ENCODE measurements at regions of chr1 and their contacts with region 1.

Region 1: GRCh38 chr1:28088168-28088961 is at the start of gene EYA3:
- DNase-seq: peak; percentile 99
- ATAC-seq: peak; percentile 93
- H3K4me3 Mint-ChIP-seq: peak within 1 kb of the TSS; percentile 98
- H3K27ac Mint-ChIP-seq: peak within 1 kb of the TSS; percentile 98
- H3K4me1 Mint-ChIP-seq: peaks cover 27% of the 10 kb centered on the region
- H3K27me3 Mint-ChIP-seq: no peaks in the 10 kb centered on the region
- total RNA-seq, gene EYA3: 30.1 to 37.1 TPM

Region 2: DNA sequence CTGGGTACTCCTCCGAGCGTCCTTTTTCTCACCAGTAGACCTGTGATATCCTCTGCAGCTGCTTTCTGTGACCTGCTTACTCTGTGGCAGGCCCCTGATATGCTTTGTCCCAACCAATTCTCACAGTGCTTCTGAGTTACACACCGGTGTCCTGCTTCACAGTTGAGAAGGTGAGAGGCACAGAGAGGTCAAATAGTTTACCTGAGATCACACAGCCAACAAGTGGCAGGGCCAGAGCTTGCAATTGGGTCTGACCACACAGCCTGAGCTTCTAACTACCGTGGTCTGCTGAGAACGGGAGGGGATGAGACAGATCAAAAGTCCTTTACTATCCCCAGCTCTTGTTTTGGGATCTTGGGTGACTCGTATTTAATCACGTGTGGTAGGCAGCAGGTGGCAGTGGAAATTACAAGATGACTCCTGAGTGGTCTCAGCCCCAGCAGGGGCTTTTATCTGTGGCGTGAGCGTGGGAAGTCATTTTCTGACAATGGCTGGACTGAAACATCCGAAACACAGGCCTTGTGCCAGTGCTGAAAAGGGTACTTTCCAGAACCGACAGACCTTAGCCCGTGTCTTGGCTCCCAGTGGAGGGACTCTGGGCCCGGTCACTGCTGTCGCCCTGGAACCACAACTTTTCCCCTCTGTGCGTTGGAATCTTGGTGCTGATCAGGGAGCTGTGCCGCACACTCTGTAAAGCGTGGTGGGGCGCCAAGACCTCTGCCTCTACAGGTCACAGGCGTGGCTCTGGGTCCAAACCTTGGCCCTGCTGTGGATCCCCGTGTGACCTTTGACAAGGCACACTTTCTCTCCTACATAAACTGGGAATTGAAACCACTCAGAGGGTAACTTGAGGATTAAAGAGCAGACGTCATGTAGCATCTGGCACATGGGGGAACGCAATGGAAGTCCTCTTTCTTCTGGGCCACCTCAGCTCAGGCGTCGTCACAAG is 204.1 kb before region 1 on chr1:
- CTCF ChIA-PET with region 1: no interaction called
- POLR2A ChIA-PET with region 1: no interaction called
- intact Hi-C with region 1: no loop called
- DNase-seq: no peak
- ATAC-seq: no peak
- H3K4me3 Mint-ChIP-seq: no peak overlapping the region
- H3K27ac Mint-ChIP-seq: peak overlapping the region; percentile 58
- H3K4me1 Mint-ChIP-seq: peaks cover 39% of the 10 kb centered on the region
- H3K27me3 Mint-ChIP-seq: no peaks in the 10 kb centered on the region

Region 3: GRCh38 chr1:27959400-27960217 is 128.8 kb before region 1 on chr1 and contains the start of gene XKR8:
- CTCF ChIA-PET with region 1: no interaction called
- POLR2A ChIA-PET with region 1: no interaction called
- intact Hi-C with region 1: loop called in 1 of 2 experiments (anchors 1 kb)
- DNase-seq: peak; percentile 89
- ATAC-seq: peak; percentile 98
- H3K4me3 Mint-ChIP-seq: peak within 1 kb of the TSS; percentile 77
- H3K27ac Mint-ChIP-seq: peak within 1 kb of the TSS; percentile 84
- H3K4me1 Mint-ChIP-seq: peaks cover 17% of the 10 kb centered on the region
- H3K27me3 Mint-ChIP-seq: no peaks in the 10 kb centered on the region
- total RNA-seq, gene XKR8: 4.2 to 6.0 TPM

Region 4: DNA sequence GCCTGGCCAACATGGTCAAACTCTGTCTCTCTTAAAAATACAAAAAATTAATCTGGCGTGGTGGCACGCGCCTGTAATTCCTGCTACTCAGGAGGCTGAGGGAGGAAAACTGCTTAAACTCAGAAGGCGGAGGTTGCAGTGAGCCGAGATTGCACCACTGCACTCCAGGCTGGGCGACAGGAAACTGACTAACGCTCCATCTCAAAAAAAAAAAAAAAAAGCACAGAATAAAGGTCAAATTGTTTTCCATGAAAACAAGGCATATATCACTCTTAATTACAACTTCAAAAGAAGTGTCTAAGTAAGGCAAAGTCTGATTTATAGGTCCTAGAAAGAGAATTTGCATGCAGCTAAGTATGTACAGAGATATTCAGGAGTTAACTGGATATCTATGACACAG is 25.6 kb before region 1 on chr1:
- CTCF ChIA-PET with region 1: interaction called, 5 read pairs
- POLR2A ChIA-PET with region 1: interaction called, 4 read pairs
- intact Hi-C with region 1: loop called in 1 of 2 experiments (anchors 1 kb)
- DNase-seq: peak; percentile 60
- ATAC-seq: peak; percentile 52
- H3K4me3 Mint-ChIP-seq: no peak overlapping the region
- H3K27ac Mint-ChIP-seq: peak overlapping the region; percentile 47
- H3K4me1 Mint-ChIP-seq: peaks cover 53% of the 10 kb centered on the region
- H3K27me3 Mint-ChIP-seq: no peaks in the 10 kb centered on the region

Region 5: DNA sequence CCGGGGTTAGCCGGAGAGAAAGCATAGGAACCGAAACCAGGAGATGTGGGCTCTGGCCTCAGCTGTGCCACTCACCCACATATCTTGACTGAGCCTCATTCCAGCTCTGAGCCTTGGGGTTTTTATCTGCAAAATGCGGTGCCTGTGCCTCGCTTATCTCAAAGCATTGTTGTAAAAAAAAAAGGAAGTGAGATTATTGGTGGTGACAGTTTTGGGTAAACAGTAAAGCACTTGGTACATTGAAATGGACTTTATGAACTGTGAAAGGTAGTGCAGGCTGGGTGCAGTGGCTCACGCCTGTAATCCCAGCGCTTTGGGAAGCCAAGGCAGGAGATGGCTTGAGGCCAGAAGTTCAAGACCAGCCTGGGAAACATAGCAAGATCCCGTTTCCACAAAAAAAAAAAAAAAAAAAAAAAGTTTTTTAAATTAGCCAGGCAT is 84.4 kb after region 1 on chr1:
- CTCF ChIA-PET with region 1: interaction called, 7 read pairs
- POLR2A ChIA-PET with region 1: interaction called, 8 read pairs
- intact Hi-C with region 1: loop called in 1 of 2 experiments (anchors 1 kb)
- DNase-seq: peak; percentile 60
- ATAC-seq: peak; percentile 23
- H3K4me3 Mint-ChIP-seq: no peak overlapping the region
- H3K27ac Mint-ChIP-seq: no peak overlapping the region
- H3K4me1 Mint-ChIP-seq: peaks cover 50% of the 10 kb centered on the region
- H3K27me3 Mint-ChIP-seq: peaks cover 46% of the 10 kb centered on the region

Region 6: DNA sequence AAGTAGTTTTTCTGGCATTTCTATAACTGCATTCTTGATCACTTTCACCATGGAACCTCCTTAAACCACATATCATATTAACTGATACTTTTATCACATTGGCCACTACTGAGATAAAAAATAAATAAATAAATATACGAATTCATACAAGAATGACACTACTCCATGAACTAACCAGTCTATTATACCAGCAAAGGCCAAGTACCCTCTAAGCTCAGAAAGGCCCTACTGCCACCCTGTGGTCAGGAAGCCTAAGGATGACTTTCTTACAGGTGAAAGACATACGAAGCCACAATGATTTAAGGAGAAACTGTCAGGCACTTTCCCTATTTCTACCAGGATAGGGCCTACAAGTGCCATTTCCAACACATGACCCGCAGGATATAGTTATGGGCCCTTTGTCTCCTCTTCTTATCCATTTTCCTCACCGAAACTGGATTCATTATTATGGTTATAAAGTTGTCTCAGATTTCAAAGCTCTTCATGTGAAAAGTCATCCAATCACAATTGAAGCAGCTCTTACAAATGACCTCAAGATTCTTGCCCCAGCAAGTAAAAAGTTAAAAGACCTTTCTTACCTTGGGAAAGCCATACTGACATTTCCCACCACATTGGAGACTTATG is 120.6 kb after region 1 on chr1:
- CTCF ChIA-PET with region 1: interaction called, 41 read pairs
- POLR2A ChIA-PET with region 1: interaction called, 3 read pairs
- intact Hi-C with region 1: loop called (anchors 1 kb)
- DNase-seq: peak; percentile 79
- ATAC-seq: peak; percentile 87
- H3K4me3 Mint-ChIP-seq: no peak overlapping the region
- H3K27ac Mint-ChIP-seq: no peak overlapping the region
- H3K4me1 Mint-ChIP-seq: peaks cover 5% of the 10 kb centered on the region
- H3K27me3 Mint-ChIP-seq: no peaks in the 10 kb centered on the region

Region 7: DNA sequence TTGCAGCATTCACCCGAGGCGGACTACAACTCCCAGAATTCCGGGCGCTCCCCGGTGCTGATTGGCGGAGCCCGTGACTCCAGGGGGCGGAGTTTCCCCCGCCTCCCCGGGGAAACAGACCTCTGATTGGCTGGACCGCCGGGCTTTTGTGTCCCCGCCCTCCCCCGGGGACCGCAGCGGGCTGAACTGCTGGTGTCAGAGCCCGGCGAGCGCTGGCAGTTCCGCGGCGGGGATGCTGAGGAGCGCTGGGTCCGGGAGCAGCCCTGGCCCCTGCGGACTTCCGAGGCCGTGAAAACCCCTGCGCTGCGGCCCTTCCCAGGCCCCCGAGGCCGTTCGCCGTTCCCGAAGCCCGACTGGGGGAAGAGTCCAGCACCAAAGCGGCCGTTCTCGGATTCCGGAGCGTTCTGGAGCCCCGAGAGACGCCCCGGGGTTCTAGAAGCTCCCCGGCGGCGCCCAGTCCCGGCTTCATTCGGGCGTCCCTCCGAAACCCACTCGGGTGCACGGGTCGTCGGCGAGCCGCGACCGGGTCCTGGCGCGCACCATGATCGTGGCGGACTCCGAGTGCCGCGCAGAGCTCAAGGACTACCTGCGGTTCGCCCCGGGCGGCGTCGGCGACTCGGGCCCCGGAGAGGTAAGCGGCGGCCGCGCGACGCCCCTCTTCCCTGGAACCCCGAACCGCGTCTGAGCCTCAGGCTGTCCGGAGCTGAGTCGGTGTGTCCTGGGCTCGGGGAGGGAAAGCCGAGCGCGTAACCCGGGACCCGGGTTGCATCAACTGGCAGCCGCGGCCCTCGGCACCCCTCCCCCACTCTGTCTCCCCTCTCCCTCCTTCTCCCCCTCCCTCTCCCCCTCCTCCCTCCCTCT is 171.2 kb after region 1 on chr1 and contains the start of gene SESN2:
- CTCF ChIA-PET with region 1: interaction called, 3 read pairs
- POLR2A ChIA-PET with region 1: no interaction called
- intact Hi-C with region 1: loop called in 1 of 2 experiments (anchors 1 kb)
- DNase-seq: peak; percentile 100
- ATAC-seq: peak; percentile 93
- H3K4me3 Mint-ChIP-seq: peak within 1 kb of the TSS; percentile 81
- H3K27ac Mint-ChIP-seq: peak within 1 kb of the TSS; percentile 99
- H3K4me1 Mint-ChIP-seq: peaks cover 42% of the 10 kb centered on the region
- H3K27me3 Mint-ChIP-seq: no peaks in the 10 kb centered on the region
- total RNA-seq, gene SESN2: 32.9 to 33.3 TPM

Region 8: DNA sequence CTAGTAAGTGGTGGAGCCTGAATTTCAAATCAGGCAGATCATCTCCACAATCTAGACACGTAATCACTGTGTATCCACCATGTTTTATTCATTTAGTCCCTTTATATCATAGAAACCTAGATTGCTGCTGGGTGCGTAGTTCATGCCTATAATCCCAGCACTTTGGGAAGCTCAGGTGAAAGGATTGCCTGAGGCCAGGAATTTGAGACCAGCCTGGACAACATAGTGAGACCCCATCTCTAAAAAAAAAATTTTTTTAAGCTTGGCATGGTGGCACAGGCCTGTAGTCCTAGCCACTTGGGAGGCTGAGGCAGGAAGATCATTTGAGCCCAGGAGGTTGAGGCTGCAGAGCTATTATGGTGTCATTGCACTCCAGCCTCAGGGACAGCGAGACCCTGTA is 250.5 kb after region 1 on chr1:
- CTCF ChIA-PET with region 1: no interaction called
- POLR2A ChIA-PET with region 1: no interaction called
- intact Hi-C with region 1: no loop called
- DNase-seq: no peak
- ATAC-seq: no peak
- H3K4me3 Mint-ChIP-seq: no peak overlapping the region
- H3K27ac Mint-ChIP-seq: no peak overlapping the region
- H3K4me1 Mint-ChIP-seq: no peaks in the 10 kb centered on the region
- H3K27me3 Mint-ChIP-seq: no peaks in the 10 kb centered on the region